GM18951 (cell line): ENCODE measurements at regions of chr10 and their contacts with region 1.

Region 1: DNA sequence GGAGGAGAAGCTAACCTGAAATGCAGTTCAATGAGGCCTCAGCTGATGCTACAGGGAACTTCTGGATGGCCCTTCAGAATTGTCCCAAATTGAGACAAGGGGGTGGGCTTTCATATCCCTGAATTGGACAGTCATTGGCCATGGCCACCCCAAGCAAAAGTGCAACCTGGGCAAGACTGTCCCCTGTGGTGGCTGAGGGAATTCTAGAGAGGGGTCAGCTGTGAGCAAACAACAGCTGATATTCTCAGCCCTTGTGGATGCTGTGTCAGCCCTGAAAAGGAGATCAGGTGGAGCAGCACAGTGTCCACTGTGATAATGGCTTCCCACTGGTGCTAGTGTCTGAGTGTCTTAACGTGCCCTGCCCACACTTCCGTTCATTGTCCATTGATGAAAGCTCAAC is 76.6 kb downstream of the SLC16A9 start:
- POLR2A ChIP-seq: no peak

Region 2: DNA sequence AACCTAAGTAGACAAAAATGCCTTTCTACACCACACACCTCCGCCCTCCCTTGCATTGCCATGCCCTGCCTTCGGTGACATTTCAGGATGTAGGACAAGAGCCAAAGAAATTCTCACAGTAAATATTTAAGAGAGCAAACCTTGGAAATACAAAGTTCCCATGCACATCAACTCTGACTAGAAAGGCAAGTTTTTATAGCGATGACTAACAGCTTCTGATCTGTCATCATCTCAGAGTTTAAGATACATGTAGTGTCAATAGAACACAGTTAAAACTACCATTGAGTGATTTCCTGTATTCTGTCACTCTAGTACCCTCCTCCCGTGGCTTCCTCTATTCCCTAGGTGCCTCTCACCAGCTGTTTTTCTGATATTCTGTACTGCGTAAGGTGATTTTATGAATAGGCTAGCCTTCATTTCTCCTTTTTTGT is 55.9 kb after region 1 on chr10:
- in situ Hi-C with region 1: no loop called
- POLR2A ChIP-seq: no peak

Region 3: GRCh38 chr10:60048091-60048501 is 415.0 kb after region 1 on chr10:
- in situ Hi-C with region 1: loop called (anchors 10 kb)
- POLR2A ChIP-seq: no peak